Activated CD4-positive, alpha-beta memory T cell treated with anti-CD3 and anti-CD28 coated beads, Interleukin-2, amount 10 ng/mL, durations not matched to agents 7 days and 5 days (primary cell): ENCODE measurements at regions of chr6 and their contacts with region 1.

Region 1: GRCh38 chr6:79869600-79870084 is 77.7 kb downstream of the ELOVL4 start:
- DNase-seq: peak; percentile 82
- H3K4me3 Mint-ChIP-seq: no peak overlapping the region
- H3K27ac Mint-ChIP-seq: no peak overlapping the region
- H3K4me1 Mint-ChIP-seq: peaks cover 12% of the 10 kb centered on the region
- H3K27me3 Mint-ChIP-seq: peaks cover 9% of the 10 kb centered on the region

Region 2: DNA sequence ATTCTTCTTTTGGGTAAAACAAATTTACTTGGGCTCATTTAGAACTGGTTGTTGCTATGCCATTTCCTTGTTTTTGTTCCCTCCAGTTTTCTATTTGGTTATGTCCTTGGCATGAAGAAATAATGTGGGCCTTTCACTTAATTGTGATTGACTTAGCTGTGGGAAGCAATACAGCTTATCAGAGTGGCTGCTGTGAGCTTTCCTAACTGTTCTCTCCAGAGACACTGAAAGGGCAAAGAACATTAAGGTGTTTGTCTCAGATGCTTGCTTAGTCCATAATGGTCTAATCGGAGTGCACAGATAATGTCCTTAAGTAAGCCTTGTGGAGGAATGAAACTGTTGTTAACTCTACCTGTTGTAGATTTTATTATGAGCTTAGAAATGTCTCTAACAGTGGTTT is 181.9 kb before region 1 on chr6:
- CTCF ChIA-PET with region 1: no interaction called
- POLR2A ChIA-PET with region 1: no interaction called
- DNase-seq: no peak
- H3K4me3 Mint-ChIP-seq: no peak overlapping the region
- H3K27ac Mint-ChIP-seq: no peak overlapping the region
- H3K4me1 Mint-ChIP-seq: no peaks in the 10 kb centered on the region
- H3K27me3 Mint-ChIP-seq: peaks cover 2% of the 10 kb centered on the region

Region 3: GRCh38 chr6:79724816-79725215 is 144.8 kb before region 1 on chr6:
- CTCF ChIA-PET with region 1: no interaction called
- POLR2A ChIA-PET with region 1: no interaction called
- DNase-seq: no peak
- H3K4me3 Mint-ChIP-seq: no peak overlapping the region
- H3K27ac Mint-ChIP-seq: no peak overlapping the region
- H3K4me1 Mint-ChIP-seq: no peaks in the 10 kb centered on the region
- H3K27me3 Mint-ChIP-seq: peaks cover 9% of the 10 kb centered on the region

Region 4: DNA sequence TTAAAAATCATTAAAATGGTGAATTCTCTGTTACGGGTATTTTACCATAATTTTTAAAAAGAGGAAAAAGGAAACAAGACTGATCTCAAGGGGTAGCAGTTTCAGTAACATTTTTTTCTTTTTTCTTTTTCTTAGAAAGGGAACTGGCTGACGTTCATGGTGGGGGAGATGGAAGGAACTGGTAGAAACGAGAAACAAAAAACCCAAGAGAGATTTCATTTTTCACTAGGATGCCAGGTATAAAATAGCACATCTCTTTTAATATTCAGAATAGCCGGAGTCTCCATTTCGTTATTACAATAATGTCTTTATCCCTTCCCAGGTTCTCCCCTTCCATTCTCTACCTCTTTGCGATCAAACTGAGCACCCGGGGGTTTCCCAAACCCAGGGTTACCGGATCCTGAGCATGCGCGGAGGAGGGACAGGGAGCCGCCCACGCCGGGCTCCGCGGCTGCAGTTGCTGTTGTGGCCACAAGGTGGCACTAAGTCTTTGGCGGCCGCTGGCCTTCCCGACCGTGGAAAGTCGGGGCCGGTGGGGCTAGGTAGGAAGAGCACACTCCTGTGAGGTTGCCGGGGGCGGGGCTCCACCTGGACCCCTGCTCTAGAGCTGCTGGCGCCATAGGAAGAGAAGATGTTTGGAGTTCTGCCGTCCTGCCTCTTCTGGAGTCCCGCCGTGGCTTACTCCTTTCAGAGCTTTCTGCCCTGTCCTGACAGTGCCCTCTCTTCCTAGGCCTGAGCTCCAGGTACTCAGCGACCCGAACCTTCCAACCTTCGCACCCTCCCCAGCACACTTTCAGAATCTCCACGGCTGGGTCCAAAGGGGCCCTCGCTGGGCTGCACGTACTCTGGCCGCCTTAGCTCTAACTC is 91.7 kb before region 1 on chr6:
- CTCF ChIA-PET with region 1: interaction called, 54 read pairs
- POLR2A ChIA-PET with region 1: no interaction called
- DNase-seq: peak; percentile 82
- H3K4me3 Mint-ChIP-seq: peak overlapping the region; percentile 63
- H3K27ac Mint-ChIP-seq: no peak overlapping the region
- H3K4me1 Mint-ChIP-seq: peaks cover 12% of the 10 kb centered on the region
- H3K27me3 Mint-ChIP-seq: no peaks in the 10 kb centered on the region

Region 5: GRCh38 chr6:79813854-79814709 is 55.6 kb before region 1 on chr6:
- CTCF ChIA-PET with region 1: interaction called, 10 read pairs
- POLR2A ChIA-PET with region 1: no interaction called
- DNase-seq: peak; percentile 63
- H3K4me3 Mint-ChIP-seq: no peak overlapping the region
- H3K27ac Mint-ChIP-seq: no peak overlapping the region
- H3K4me1 Mint-ChIP-seq: no peaks in the 10 kb centered on the region
- H3K27me3 Mint-ChIP-seq: peaks cover 5% of the 10 kb centered on the region

Region 6: GRCh38 chr6:79894939-79895338 is 25.3 kb after region 1 on chr6:
- CTCF ChIA-PET with region 1: interaction called, 12 read pairs
- POLR2A ChIA-PET with region 1: no interaction called
- DNase-seq: no peak
- H3K4me3 Mint-ChIP-seq: no peak overlapping the region
- H3K27ac Mint-ChIP-seq: no peak overlapping the region
- H3K4me1 Mint-ChIP-seq: peaks cover 5% of the 10 kb centered on the region
- H3K27me3 Mint-ChIP-seq: peaks cover 8% of the 10 kb centered on the region

Region 7: DNA sequence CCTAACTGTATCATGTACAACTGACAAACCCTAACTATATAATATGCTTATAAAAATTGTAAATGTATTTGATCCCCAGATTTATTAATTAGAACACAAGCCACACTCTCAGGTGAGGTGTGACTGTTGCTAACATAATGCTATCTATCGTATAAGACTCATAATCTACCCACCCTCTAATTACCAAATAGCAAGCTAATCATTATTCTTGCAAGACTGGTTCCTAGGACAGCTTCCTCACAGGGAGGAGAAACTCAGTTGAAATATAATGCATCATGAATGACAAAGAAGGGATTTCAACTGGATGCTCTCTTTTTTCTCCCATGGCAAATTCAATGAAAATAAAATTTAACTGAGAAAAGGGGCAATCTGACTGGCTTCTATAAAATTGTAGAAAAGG is 42.4 kb after region 1 on chr6:
- CTCF ChIA-PET with region 1: interaction called, 11 read pairs
- POLR2A ChIA-PET with region 1: no interaction called
- DNase-seq: no peak
- H3K4me3 Mint-ChIP-seq: no peak overlapping the region
- H3K27ac Mint-ChIP-seq: no peak overlapping the region
- H3K4me1 Mint-ChIP-seq: peaks cover 8% of the 10 kb centered on the region
- H3K27me3 Mint-ChIP-seq: peaks cover 4% of the 10 kb centered on the region

Region 8: DNA sequence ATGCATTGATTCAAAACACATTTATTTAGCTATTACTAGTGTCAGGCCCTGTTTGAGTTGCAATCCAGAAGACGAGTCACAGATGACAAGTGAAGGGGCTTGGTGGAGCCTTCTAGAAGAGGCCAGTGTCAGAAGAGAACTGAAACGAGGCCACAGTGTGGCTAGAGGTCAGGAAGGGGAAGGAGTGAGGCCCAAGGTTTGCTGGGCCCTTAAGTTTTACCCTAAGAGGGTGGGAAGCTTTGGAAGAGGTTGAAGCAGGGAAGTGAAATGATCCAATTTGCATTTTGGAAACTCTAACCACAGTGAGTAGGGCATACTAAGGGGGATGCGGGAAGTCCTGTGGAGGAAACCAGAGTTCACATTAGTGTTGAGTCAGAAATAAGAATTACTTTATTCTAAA is 159.8 kb after region 1 on chr6:
- CTCF ChIA-PET with region 1: no interaction called
- POLR2A ChIA-PET with region 1: no interaction called
- DNase-seq: no peak
- H3K4me3 Mint-ChIP-seq: no peak overlapping the region
- H3K27ac Mint-ChIP-seq: no peak overlapping the region
- H3K4me1 Mint-ChIP-seq: peaks cover 5% of the 10 kb centered on the region
- H3K27me3 Mint-ChIP-seq: no peaks in the 10 kb centered on the region

Region 9: DNA sequence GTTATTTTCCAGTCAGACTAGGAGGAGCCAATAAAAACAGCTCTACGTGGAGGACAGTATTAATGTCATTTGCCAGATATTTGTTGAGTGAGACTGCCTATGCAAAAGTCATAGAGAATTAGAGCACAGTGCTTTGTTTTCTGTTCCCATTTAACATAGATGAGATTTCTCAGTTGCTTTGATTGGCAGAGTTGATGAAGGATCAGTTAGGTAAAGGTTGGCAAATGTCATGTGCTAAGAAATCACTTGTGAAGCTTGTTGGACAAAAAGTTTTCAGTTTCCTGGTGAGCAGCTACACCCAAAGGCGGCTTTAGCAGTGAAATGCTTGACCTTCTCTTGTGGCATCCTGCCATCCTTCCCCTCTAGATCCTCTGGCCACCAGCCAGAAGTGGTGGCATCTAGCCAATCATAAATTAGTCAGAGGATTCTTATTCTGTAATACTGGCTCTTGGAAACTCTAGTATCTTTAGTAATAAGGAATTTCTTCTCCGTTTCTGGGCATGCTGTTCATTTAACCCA is 273.8 kb after region 1 on chr6:
- CTCF ChIA-PET with region 1: no interaction called
- POLR2A ChIA-PET with region 1: no interaction called
- DNase-seq: no peak
- H3K4me3 Mint-ChIP-seq: no peak overlapping the region
- H3K27ac Mint-ChIP-seq: no peak overlapping the region
- H3K4me1 Mint-ChIP-seq: no peaks in the 10 kb centered on the region
- H3K27me3 Mint-ChIP-seq: no peaks in the 10 kb centered on the region